ENCODE measurements at regions of chr13 and their contacts with region 1.

Region 1: GRCh38 chr13:48000778-48001628 is at the start of gene SUCLA2:
- DNase-seq: peak; percentile 75 to 96 (median 88)
- ATAC-seq: peak; percentile 100
- H3K4me3 ChIP-seq: peak within 1 kb of the TSS; percentile 97
- H3K4me3 Mint-ChIP-seq: peak within 1 kb of the TSS; percentile 88 to 97 (median 96)
- H3K27ac ChIP-seq: peak within 1 kb of the TSS; percentile 81
- H3K27ac Mint-ChIP-seq: peak within 1 kb of the TSS; percentile 75 to 96 (median 91)
- H3K4me1 ChIP-seq: peaks cover 7 to 10% of the 10 kb centered on the region in 2 donors
- H3K4me1 Mint-ChIP-seq: peaks cover 24 to 48% (median 42%) of the 10 kb centered on the region in 7 donors
- H3K27me3 ChIP-seq: no peaks in the 10 kb centered on the region
- H3K27me3 Mint-ChIP-seq: peaks cover 0 to 2% (median 0%) of the 10 kb centered on the region in 5 donors
- total RNA-seq, gene SUCLA2: 20.0 to 36.6 (median 26.4) TPM

Region 2: GRCh38 chr13:47794963-47795362 is 206.0 kb before region 1 on chr13:
- CTCF ChIA-PET with region 1: no interaction called
- POLR2A ChIA-PET with region 1: no interaction called
- intact Hi-C with region 1: loop called in 1 of 2 experiments (anchors 5 kb)
- DNase-seq: no peak
- ATAC-seq: no peak
- H3K4me3 ChIP-seq: no peak overlapping the region
- H3K4me3 Mint-ChIP-seq: no peak overlapping the region
- H3K27ac ChIP-seq: no peak overlapping the region
- H3K27ac Mint-ChIP-seq: no peak overlapping the region
- H3K4me1 ChIP-seq: no peaks in the 10 kb centered on the region
- H3K4me1 Mint-ChIP-seq: no peaks in the 10 kb centered on the region
- H3K27me3 ChIP-seq: no peaks in the 10 kb centered on the region
- H3K27me3 Mint-ChIP-seq: peaks cover 0 to 6% (median 3%) of the 10 kb centered on the region in 5 donors

Region 3: GRCh38 chr13:48037346-48038173 is 36.6 kb after region 1 on chr13 and contains the start of gene NUDT15:
- CTCF ChIA-PET with region 1: interaction called, 6 read pairs
- POLR2A ChIA-PET with region 1: interaction called, 7 read pairs
- intact Hi-C with region 1: loop called (anchors 1 kb)
- DNase-seq: peak; percentile 93 to 98 (median 97)
- ATAC-seq: peak; percentile 96
- H3K4me3 ChIP-seq: peak within 1 kb of the TSS; percentile 90
- H3K4me3 Mint-ChIP-seq: peak within 1 kb of the TSS; percentile 82 to 98 (median 95)
- H3K27ac ChIP-seq: peak within 1 kb of the TSS; percentile 91
- H3K27ac Mint-ChIP-seq: peak within 1 kb of the TSS; percentile 96 to 100 (median 97)
- H3K4me1 ChIP-seq: peaks cover 14 to 15% of the 10 kb centered on the region in 2 donors
- H3K4me1 Mint-ChIP-seq: peaks cover 15 to 52% (median 40%) of the 10 kb centered on the region in 7 donors
- H3K27me3 ChIP-seq: no peaks in the 10 kb centered on the region
- H3K27me3 Mint-ChIP-seq: no peaks in the 10 kb centered on the region
- total RNA-seq, gene NUDT15: 4.3 to 13.6 (median 8.7) TPM

Region 4: DNA sequence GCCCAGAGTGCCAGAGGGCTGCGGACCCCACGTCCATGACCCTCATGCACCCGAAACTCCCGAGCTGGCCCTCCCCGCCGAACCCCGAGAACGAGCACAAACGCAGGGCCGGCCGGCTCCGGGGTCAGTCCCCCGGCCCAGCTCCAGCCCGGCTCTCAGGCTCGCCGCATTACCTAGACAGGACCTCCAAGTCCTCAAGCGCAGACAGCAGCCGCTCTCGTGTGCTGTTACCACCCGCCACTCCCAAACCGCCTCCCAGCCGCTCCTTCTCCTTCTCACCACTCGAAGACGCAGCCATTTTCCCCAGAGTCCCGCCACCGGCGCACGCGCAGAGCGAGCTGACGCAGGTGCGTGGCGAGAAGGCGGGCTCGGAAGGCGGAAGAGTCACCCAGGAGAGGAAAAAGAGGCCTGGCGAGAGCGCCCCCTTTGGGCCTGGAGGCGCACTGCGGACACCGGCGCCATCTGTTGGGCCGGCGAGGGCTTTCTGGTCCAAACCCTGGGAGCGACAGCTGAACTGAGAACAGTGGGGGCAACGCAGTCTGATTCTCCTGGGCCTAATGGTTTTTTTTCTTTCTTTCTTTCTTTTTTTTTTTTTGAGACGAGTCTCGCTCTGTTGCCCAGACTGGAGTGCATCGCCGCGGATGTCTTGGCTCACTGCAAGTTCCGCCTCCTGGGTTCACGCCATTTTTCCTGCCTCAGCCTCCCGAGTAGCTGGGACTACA is 93.9 kb after region 1 on chr13 and contains the start of gene MED4:
- CTCF ChIA-PET with region 1: no interaction called
- POLR2A ChIA-PET with region 1: no interaction called
- intact Hi-C with region 1: loop called (anchors 1 kb)
- DNase-seq: peak; percentile 94 to 99 (median 98)
- ATAC-seq: peak; percentile 100
- H3K4me3 ChIP-seq: peak within 1 kb of the TSS; percentile 90
- H3K4me3 Mint-ChIP-seq: peak within 1 kb of the TSS; percentile 94 to 99 (median 96)
- H3K27ac ChIP-seq: peak within 1 kb of the TSS; percentile 99
- H3K27ac Mint-ChIP-seq: peak within 1 kb of the TSS; percentile 92 to 98 (median 96)
- H3K4me1 ChIP-seq: peaks cover 13 to 26% of the 10 kb centered on the region in 2 donors
- H3K4me1 Mint-ChIP-seq: peaks cover 26 to 56% (median 48%) of the 10 kb centered on the region in 7 donors
- H3K27me3 ChIP-seq: no peaks in the 10 kb centered on the region
- H3K27me3 Mint-ChIP-seq: peaks cover 0 to 9% (median 0%) of the 10 kb centered on the region in 5 donors
- total RNA-seq, gene MED4: 43.4 to 60.9 (median 50.0) TPM

Region 5: DNA sequence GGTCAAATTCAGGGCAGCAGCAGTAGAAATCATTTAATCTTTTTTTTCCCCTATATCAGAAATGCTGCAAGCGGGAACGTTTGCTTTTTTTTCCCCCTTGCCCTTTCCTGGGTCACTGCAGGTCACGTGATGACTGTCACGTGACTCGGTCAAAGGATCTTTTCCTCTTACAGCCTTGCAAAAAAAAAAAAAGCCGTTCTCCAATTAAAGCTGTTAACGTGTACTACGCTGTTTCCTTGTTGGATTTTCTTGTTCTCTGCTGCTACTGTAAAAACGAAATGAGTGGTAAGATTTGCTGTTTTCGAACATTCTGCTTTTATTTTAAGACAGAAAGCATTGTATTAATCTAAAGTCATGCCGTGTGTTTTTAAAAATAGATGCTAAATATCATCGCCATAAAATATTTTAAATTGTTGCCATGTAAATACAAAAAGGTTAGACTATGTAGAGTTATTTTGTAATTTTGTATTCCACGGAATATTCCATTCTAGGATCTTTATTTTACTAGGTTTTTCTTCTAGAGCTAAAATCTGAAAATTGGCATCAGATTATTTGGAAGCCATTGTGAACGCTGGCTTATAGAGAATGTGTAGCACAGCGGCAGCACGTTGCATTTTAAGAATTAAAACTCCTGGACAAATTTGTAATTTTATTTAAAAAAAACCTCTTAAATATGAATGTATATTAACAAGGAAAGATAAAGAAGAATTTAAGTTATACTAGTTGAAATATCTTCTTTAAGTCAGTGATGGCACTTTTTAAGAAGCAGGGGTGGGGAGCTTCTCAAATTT is 1109.3 kb after region 1 on chr13:
- CTCF ChIA-PET with region 1: no interaction called
- POLR2A ChIA-PET with region 1: no interaction called
- intact Hi-C with region 1: loop called in 1 of 2 experiments (anchors 10 kb)
- DNase-seq: peak; percentile 36 to 76 (median 68)
- ATAC-seq: peak; percentile 82
- H3K4me3 ChIP-seq: peak overlapping the region; percentile 75
- H3K4me3 Mint-ChIP-seq: peak overlapping the region; percentile 79 to 94 (median 90)
- H3K27ac ChIP-seq: peak overlapping the region; percentile 80
- H3K27ac Mint-ChIP-seq: peak overlapping the region; percentile 79 to 91 (median 90)
- H3K4me1 ChIP-seq: peaks cover 11 to 25% of the 10 kb centered on the region in 2 donors
- H3K4me1 Mint-ChIP-seq: peaks cover 16 to 48% (median 30%) of the 10 kb centered on the region in 7 donors
- H3K27me3 ChIP-seq: no peaks in the 10 kb centered on the region
- H3K27me3 Mint-ChIP-seq: no peaks in the 10 kb centered on the region